Right ventricle myocardium superior (tissue), 1 donor: ENCODE measurements at regions of chr5 and their contacts with region 1.

Region 1: DNA sequence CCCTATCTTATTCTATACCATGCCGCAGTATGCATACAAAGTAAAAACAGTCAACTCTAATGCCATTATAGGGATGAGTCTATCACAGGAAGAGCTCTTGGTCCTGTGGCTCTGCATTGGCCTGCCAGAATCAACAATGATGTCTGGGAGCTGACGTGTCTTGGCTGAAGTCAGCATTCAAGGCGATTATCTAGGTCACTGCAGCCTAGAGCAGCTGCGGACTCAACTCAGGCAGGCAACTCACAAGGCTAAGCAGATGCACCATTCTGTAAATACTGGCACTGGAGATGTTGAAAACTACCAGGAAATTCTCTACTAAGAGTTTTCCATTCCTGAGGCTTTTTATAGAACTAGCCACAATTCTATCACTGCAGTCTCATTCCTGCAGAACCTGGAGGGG is 13.3 kb downstream of the SPATA9 start:
- DNase-seq: peak; percentile 75
- ATAC-seq: peak; percentile 93

Region 2: DNA sequence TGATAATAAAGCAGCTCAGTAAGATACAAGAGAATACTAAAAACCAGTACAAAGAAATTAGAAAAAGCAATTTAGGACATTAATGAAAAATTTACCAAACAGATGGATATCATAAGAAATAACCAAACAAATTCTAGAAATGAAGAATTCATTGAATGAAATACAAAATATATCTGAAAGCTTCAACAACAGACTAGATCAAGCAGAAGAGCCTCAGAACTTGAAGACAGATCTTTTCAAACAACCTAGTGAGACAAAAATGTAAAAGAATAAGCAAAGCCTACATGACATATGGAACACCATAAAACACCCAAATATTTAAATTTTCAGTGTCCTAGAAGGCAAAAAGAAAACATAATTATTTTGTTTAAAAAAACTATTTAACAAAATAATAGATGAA is 181.7 kb before region 1 on chr5:
- intact Hi-C with region 1: no loop called
- DNase-seq: no peak
- ATAC-seq: no peak

Region 3: DNA sequence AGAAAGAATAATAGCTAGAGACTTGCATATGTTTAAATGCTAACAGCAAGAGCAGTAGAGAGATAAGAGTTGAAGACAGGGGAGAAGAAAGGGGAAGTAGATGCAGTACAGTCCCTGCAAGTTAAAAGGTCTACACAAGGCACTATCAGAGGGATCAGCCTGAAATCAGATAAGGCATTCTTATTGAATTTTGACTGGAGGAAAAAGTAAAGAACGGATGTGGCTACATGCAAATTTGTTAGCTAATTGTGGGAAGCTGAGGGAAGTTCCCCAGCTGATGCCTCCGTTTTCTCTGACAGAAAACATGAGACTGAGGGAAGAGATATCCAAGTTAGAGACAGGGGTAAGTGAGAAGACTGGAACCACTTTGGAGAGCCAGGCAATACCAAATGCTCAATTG is 48.7 kb after region 1 on chr5:
- intact Hi-C with region 1: no loop called
- DNase-seq: no peak
- ATAC-seq: no peak

Region 4: DNA sequence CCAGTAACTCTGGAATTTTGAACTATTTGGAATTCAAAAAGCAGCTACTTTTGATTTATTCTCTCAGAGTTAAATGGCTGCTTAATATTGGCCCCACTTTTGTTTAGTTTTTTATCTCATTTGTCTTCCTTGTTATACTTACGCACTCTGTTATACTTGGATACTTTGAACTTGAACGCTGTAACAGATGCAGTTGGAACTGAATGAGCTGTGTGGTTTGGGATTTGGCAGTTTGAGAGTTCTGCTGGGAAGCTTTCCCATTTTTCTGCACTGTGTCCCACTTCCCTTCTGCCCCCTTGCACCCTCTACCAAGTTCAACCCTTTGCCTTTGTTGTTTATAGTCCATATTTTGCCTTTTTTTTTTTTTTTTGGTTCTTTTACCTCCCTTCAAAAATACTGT is 65.4 kb after region 1 on chr5:
- intact Hi-C with region 1: loop called (anchors 5 kb)
- DNase-seq: no peak
- ATAC-seq: peak; percentile 36